ENCODE measurements at regions of chr2 and their contacts with region 1.

Region 1: DNA sequence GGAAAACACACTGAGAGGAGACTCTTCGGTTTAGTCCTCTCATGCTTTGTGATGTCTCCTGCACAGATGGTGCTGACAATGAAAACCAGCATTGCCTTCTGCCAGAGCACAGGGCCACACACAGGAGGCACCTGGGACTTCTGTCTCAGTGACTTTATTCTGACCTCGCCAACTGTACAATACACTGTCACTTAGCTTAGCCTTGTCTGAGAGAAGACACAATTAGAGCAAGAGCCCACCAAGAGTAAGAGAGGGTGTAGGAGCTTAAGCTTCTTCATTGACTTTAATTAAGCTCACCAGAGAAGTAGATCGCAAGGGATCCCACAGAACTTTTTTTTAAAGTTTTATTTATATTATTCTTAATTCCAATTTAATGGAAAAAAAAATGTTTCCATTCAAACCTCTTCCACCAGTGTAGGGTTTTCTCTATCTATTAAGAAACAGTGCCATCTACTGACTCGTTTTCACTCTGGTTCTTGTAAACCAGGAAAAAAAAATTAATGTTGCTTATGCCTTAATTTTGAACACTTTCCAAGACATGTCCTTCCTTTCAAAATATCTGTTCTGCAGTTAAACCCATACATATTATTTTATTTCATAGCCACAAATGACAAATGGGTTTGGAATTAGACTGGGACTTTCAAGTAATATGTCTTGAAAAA is 42.4 kb upstream of the DDX18 start:
- DNase-seq: no peak
- H3K4me3 ChIP-seq: no peak overlapping the region
- H3K27ac ChIP-seq: no peak overlapping the region
- H3K4me1 ChIP-seq: 0 out of 7 replicates have a peak, but pooled peaks cover 0 to 4% (median 0%) of the 10 kb centered on the region in 4 experiments
- H3K27me3 ChIP-seq: no peaks in the 10 kb centered on the region
- CTCF ChIP-seq: peak in 2 of 3 experiments; percentile 19 to 27; a peak in 2 of 4 replicates
- EP300 ChIP-seq: no peak
- POLR2A ChIP-seq: no peak
- RAD21 ChIP-seq: peak in 1 of 2 experiments; percentile 66

Region 2: DNA sequence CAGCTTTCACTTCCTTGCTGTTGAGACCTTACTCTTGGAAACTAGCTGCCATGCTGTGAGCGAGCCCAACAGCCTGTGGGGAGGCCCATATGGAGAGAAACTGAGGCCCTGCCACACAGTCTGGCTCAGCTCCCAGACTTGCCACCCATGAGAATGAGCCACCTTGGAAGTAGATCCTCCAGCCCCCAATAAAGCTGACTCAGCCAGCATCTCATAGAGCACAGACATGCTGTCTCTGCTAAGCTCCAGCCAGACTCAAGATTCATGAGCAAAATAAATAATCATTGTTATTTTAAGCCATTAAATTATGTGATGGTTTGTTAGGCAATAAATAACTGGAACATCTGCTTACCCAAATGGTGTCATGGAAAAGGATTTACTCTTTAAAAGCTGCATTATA is 11.2 kb before region 1 on chr2:
- CTCF ChIA-PET with region 1: interaction called, 21 read pairs
- POLR2A ChIA-PET with region 1: no interaction called
- DNase-seq: no peak
- H3K4me3 ChIP-seq: no peak overlapping the region
- H3K27ac ChIP-seq: no peak overlapping the region
- H3K4me1 ChIP-seq: no peaks in the 10 kb centered on the region
- H3K27me3 ChIP-seq: no peaks in the 10 kb centered on the region
- CTCF ChIP-seq: no peak
- EP300 ChIP-seq: no peak
- POLR2A ChIP-seq: no peak
- RAD21 ChIP-seq: no peak

Region 3: GRCh38 chr2:117785740-117786139 is 13.6 kb after region 1 on chr2:
- CTCF ChIA-PET with region 1: interaction called, 12 read pairs
- POLR2A ChIA-PET with region 1: no interaction called
- DNase-seq: no peak
- H3K4me3 ChIP-seq: no peak overlapping the region
- H3K27ac ChIP-seq: no peak overlapping the region
- H3K4me1 ChIP-seq: no peaks in the 10 kb centered on the region
- H3K27me3 ChIP-seq: no peaks in the 10 kb centered on the region
- CTCF ChIP-seq: peak in 2 of 3 experiments; percentile 56 to 58; a peak in 3 of 4 replicates
- EP300 ChIP-seq: no peak
- POLR2A ChIP-seq: no peak
- RAD21 ChIP-seq: peak; percentile 70 to 76

Measured in H1 (cell line).